ENCODE measurements at regions of chr11 and their contacts with region 1.

Region 1: GRCh38 chr11:102940714-102941588 is 14.6 kb downstream of the MMP13 start:
- DNase-seq: peak; percentile 38
- H3K4me3 Mint-ChIP-seq: no peak overlapping the region
- H3K27ac Mint-ChIP-seq: no peak overlapping the region
- H3K4me1 Mint-ChIP-seq: peaks cover 2% of the 10 kb centered on the region
- H3K27me3 Mint-ChIP-seq: peaks cover 3% of the 10 kb centered on the region

Region 2: DNA sequence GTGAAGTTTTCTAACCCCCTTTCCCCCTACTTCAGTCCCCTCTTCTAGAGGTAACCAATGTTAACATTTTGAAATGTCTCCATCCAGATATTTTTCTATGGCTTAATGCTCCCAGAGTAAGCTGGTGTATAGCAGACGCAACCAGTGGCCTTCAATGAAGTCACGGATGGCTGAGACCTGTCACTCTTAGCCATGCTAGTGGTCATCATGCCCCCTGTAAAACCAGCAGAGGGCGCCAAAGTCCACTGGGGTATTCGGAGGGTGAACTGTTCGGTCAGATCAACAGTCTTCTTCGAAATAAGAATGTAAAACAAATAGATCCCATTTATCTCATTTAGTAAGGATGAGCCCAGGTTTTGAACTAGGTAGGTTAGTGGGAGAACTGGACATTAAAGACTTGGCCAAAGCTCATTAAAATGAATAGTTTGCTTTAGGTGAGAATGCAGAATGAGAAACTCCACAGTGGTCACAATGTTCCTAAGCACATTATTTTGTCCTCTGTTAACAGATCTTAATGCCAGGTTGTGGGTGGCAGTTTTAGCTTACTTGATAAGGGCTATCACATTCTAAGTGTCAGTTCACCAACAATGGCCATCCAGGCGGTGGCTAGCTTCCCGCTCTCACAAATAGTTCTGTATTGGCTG is 207.6 kb before region 1 on chr11:
- CTCF ChIA-PET with region 1: interaction called, 14 read pairs
- POLR2A ChIA-PET with region 1: no interaction called
- intact Hi-C with region 1: loop called (anchors 1 kb)
- DNase-seq: peak; percentile 70
- H3K4me3 Mint-ChIP-seq: no peak overlapping the region
- H3K27ac Mint-ChIP-seq: no peak overlapping the region
- H3K4me1 Mint-ChIP-seq: no peaks in the 10 kb centered on the region
- H3K27me3 Mint-ChIP-seq: peaks cover 2% of the 10 kb centered on the region

Region 3: GRCh38 chr11:102794447-102794781 is 146.5 kb before region 1 on chr11:
- CTCF ChIA-PET with region 1: interaction called, 4 read pairs
- POLR2A ChIA-PET with region 1: no interaction called
- intact Hi-C with region 1: loop called (anchors 1 kb)
- DNase-seq: peak; percentile 23
- H3K4me3 Mint-ChIP-seq: no peak overlapping the region
- H3K27ac Mint-ChIP-seq: no peak overlapping the region
- H3K4me1 Mint-ChIP-seq: no peaks in the 10 kb centered on the region
- H3K27me3 Mint-ChIP-seq: peaks cover 1% of the 10 kb centered on the region

Region 4: DNA sequence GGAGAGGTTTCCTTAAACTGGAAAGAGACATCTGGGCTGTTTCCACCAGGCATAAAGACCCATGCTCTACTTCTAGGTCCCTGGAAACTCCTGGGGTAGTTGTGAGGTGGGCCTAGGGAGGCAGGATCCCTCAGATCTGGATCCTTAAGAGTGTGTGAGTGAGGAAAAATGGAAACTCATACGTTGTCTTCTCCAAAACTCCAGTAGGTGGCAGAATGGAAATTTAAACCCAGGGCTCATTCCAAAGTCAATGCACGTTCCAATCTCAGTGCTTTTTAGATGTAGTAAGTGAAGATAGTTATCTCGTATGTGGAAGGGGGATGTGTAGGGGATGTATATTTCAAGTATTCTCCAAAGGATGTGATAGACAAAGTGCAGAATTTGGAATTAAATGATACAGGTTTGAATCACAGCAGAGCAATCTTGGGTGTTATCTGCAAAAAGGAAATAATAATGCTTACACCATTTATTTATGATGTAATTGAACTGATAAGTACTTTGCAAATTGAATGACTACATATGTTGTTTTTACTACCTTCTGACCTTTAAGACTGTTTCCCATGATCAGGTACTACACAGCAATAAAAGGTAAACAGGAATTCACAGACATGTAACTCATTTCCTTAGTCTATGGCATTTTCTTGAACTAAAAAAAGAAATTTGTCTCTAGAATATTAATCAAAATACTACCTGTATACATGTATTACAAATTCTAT is 129.8 kb before region 1 on chr11:
- CTCF ChIA-PET with region 1: interaction called, 5 read pairs
- POLR2A ChIA-PET with region 1: no interaction called
- intact Hi-C with region 1: loop called (anchors 2 kb)
- DNase-seq: no peak
- H3K4me3 Mint-ChIP-seq: no peak overlapping the region
- H3K27ac Mint-ChIP-seq: no peak overlapping the region
- H3K4me1 Mint-ChIP-seq: no peaks in the 10 kb centered on the region
- H3K27me3 Mint-ChIP-seq: peaks cover 5% of the 10 kb centered on the region

Region 5: GRCh38 chr11:103055221-103055890 is 114.4 kb after region 1 on chr11:
- CTCF ChIA-PET with region 1: interaction called, 4 read pairs
- POLR2A ChIA-PET with region 1: no interaction called
- intact Hi-C with region 1: loop called (anchors 2 kb)
- DNase-seq: no peak
- H3K4me3 Mint-ChIP-seq: no peak overlapping the region
- H3K27ac Mint-ChIP-seq: no peak overlapping the region
- H3K4me1 Mint-ChIP-seq: peaks cover 12% of the 10 kb centered on the region
- H3K27me3 Mint-ChIP-seq: no peaks in the 10 kb centered on the region

Measured in activated CD4-positive, alpha-beta memory T cell treated with anti-CD3 and anti-CD28 coated beads for 36 hours (primary cell).